Activated CD4-positive, alpha-beta T cell treated with anti-CD3 and anti-CD28 coated beads, Interleukin-2, amount 10 ng/mL, durations not matched to agents 24 days and 14 days (primary cell): ENCODE measurements at regions of chr17 and their contacts with region 1.

Region 1: GRCh38 chr17:59859444-59860025 is 33.2 kb downstream of the TUBD1 start:
- DNase-seq: peak; percentile 68
- H3K4me3 Mint-ChIP-seq: no peak overlapping the region
- H3K27ac Mint-ChIP-seq: peak overlapping the region; percentile 48
- H3K4me1 Mint-ChIP-seq: peaks cover 18% of the 10 kb centered on the region
- H3K27me3 Mint-ChIP-seq: no peaks in the 10 kb centered on the region

Region 2: GRCh38 chr17:59746849-59747445 is 112.6 kb before region 1 on chr17:
- intact Hi-C with region 1: loop called (anchors 1 kb)
- DNase-seq: peak; percentile 74
- H3K4me3 Mint-ChIP-seq: no peak overlapping the region
- H3K27ac Mint-ChIP-seq: peak overlapping the region; percentile 20
- H3K4me1 Mint-ChIP-seq: peaks cover 19% of the 10 kb centered on the region
- H3K27me3 Mint-ChIP-seq: no peaks in the 10 kb centered on the region

Region 3: DNA sequence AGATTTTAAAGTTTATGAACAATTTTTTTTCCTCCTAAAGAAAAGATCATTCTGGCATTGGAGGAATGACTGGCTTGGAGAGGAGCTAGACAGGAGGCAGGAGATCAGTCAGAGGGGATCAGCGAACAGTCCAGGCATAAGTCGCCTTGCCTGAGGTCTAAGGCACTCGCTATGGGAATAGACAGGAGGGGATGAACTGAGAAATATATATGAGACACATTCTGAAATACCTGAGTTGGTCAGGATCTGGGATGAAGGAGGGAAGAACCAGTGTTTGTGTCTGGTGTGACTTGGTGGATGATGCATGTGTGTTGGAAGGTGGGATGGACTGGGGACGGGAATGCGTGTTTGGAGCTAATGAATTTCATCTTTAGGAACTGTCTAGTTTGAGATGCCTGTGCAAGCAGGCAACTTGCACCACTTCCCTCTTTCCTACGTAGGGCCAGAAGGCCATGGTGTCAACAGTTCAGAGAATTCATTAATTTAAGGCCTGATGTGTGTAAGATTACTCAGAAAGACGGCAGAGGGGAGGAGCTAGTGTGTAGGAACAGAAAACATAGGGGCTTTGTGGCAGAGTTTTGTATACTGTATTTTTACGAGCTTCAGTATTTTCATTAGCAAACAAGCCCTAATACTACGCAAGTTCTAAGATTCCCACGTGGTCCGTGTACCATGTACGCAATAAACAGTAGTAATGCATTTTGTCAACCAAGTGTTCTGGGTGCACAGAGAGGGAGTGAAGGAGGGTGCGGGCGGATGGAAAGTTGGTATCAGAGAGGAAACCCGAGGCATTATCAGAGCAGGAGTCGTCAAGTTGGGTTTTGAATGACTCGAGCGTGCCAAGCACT is 218.4 kb after region 1 on chr17:
- intact Hi-C with region 1: no loop called
- DNase-seq: no peak
- H3K4me3 Mint-ChIP-seq: peak overlapping the region; percentile 87
- H3K27ac Mint-ChIP-seq: peak overlapping the region; percentile 96
- H3K4me1 Mint-ChIP-seq: peaks cover 27% of the 10 kb centered on the region
- H3K27me3 Mint-ChIP-seq: no peaks in the 10 kb centered on the region